ENCODE measurements at regions of chr3 and their contacts with region 1.

Region 1: DNA sequence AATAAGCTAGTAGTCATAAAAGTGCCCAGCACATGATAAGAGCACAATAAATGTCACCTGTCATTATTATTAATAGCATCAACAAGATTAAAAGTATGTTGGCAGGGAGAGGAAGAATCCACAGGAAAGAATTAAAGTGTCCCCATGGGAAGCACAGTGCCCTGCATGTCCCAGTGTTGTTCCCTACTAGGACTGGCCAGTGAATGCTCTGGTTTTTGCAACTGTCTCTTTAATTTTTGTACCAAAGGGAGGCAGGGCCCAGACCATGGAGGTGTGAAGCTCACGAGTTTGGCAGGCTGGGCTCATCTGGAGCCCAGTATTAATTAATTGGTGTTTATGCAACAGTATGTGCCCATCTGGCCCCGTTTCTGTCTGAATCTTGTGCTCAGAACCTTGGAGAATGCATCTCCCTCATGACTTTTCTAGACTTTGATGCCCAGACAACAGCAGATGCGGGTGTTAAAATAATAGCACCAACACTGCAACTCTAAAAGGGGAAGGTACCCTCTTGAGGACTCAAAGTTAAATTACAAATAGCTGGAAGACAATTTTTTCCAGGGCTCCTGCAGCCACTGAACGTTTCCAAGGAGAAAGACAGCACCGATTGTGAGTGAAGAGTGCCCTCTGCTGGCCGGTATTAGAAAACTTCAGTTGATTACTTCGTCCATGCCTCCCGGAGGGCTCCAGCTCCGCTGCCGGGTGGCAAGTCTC is 71.9 kb upstream of the SPATA12 start:
- DNase-seq: peak; percentile 44
- H3K4me3 Mint-ChIP-seq: no peak overlapping the region
- H3K27ac Mint-ChIP-seq: no peak overlapping the region
- H3K4me1 Mint-ChIP-seq: peaks cover 28% of the 10 kb centered on the region
- H3K27me3 Mint-ChIP-seq: peaks cover 24% of the 10 kb centered on the region

Region 2: DNA sequence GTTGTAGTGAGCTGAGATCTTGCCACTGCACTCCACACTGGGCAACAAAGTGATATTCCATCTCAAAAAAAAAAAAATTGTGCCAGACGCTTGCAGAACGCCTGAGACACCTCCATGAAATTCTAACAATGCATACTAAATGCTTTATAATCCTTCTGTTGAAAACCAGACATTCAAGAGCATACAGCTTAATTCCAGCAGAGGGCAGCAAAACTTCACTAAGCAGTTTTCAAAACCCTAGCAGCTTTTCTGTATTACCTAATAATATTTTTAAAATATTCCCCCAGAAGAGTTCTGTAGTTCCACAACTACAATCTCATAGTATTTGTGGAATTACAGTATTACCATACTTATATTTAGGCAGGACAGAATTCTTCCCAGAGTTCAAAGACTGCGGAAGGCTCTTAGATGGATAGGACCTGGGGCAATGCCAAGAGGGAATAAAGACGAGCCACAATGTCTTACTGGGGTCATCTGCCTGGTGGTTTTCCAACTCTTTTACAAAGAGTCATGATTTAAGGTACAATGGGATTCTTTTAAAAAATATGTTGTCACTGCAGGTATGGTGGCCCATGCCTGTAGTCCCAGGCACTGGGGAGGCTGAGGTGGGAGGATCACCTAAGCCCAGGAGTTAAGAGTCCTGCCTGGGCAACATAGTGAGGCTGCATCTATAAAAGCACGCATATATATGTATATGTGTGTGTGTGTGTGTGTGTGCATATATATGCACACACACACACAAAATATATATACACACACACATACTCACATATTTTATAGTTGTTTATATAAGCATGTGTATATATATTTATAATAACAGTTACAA is 285.9 kb before region 1 on chr3:
- intact Hi-C with region 1: loop called (anchors 1 kb)
- DNase-seq: peak; percentile 29
- H3K4me3 Mint-ChIP-seq: no peak overlapping the region
- H3K27ac Mint-ChIP-seq: no peak overlapping the region
- H3K4me1 Mint-ChIP-seq: peaks cover 22% of the 10 kb centered on the region
- H3K27me3 Mint-ChIP-seq: no peaks in the 10 kb centered on the region

Region 3: GRCh38 chr3:56855856-56856512 is 132.6 kb before region 1 on chr3:
- intact Hi-C with region 1: loop called (anchors 2 kb)
- DNase-seq: no peak
- H3K4me3 Mint-ChIP-seq: no peak overlapping the region
- H3K27ac Mint-ChIP-seq: peak overlapping the region; percentile 20
- H3K4me1 Mint-ChIP-seq: peaks cover 57% of the 10 kb centered on the region
- H3K27me3 Mint-ChIP-seq: no peaks in the 10 kb centered on the region

Measured in activated T-helper 2 cell treated with anti-CD3 and anti-CD28 coated beads, Interferon-gamma antibody, Interleukin-2, Interleukin-4, amounts not matched to agents 10 μg/mL and 5 μg/mL and 100 μg/mL, durations not matched to agents 14 hours and 24 hours and 36 hours (primary cell).